Heart right ventricle (tissue), 16 donors: ENCODE measurements at regions of chr11 and their contacts with region 1.

Region 1: GRCh38 chr11:11798586-11799438 is 43.0 kb upstream of the USP47 start:
- DNase-seq: peak; percentile 83 to 86
- ATAC-seq: peak; percentile 79 to 95 (median 91)
- H3K4me3 ChIP-seq: no peak overlapping the region
- H3K27ac ChIP-seq: no peak overlapping the region
- H3K4me1 ChIP-seq: peaks cover 0 to 9% (median 0%) of the 10 kb centered on the region in 9 donors
- H3K27me3 ChIP-seq: peaks cover 0 to 22% (median 0%) of the 10 kb centered on the region in 7 donors
- CTCF ChIP-seq: peak; percentile 81 to 97 (median 92)

Region 2: DNA sequence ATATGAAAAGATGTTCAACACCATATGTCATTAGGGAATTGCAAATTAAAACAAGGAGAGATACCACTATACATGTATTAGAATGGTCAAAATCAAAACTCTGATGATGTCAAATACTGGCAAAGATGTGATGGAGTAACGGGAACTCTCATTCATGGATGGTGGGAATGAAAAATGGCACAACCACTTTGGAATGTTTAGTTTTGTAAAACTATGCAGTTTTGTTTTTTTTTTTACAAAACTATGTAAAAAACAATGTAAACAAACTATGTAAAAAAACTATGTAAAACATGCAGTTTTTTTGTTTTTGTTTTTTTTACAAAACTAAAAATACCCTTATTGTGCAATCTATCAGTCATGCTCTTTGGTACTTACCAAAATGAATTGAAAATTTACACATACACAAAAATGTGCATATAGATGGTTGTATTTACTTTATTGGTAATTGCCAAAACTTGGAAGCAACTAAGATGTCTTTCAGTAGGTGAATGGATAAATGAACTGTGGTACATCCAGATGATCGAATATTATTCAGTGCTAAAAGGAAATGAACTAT is 37.9 kb after region 1 on chr11:
- intact Hi-C with region 1: loop called in 2 of 10 experiments (anchors 5 kb)
- DNase-seq: no peak
- ATAC-seq: no peak
- H3K4me3 ChIP-seq: no peak overlapping the region
- H3K27ac ChIP-seq: no peak overlapping the region
- H3K4me1 ChIP-seq: peaks cover 0 to 10% (median 0%) of the 10 kb centered on the region in 9 donors
- H3K27me3 ChIP-seq: no peaks in the 10 kb centered on the region
- CTCF ChIP-seq: no peak

Region 3: GRCh38 chr11:11841723-11842420 is 43.1 kb after region 1 on chr11 and contains the start of gene USP47:
- intact Hi-C with region 1: loop called in 4 of 10 experiments (anchors 5 kb)
- DNase-seq: peak; percentile 94 to 95
- ATAC-seq: peak; percentile 90 to 96 (median 94)
- H3K4me3 ChIP-seq: peak within 1 kb of the TSS; percentile 61 to 97 (median 84)
- H3K27ac ChIP-seq: peak within 1 kb of the TSS; percentile 93 to 99 (median 97)
- H3K4me1 ChIP-seq: peaks cover 0 to 47% (median 38%) of the 10 kb centered on the region in 9 donors
- H3K27me3 ChIP-seq: no peaks in the 10 kb centered on the region
- CTCF ChIP-seq: peak; percentile 38 to 81 (median 59)
- total RNA-seq, gene USP47: 46.4 to 56.4 (median 52.8) TPM

Region 4: DNA sequence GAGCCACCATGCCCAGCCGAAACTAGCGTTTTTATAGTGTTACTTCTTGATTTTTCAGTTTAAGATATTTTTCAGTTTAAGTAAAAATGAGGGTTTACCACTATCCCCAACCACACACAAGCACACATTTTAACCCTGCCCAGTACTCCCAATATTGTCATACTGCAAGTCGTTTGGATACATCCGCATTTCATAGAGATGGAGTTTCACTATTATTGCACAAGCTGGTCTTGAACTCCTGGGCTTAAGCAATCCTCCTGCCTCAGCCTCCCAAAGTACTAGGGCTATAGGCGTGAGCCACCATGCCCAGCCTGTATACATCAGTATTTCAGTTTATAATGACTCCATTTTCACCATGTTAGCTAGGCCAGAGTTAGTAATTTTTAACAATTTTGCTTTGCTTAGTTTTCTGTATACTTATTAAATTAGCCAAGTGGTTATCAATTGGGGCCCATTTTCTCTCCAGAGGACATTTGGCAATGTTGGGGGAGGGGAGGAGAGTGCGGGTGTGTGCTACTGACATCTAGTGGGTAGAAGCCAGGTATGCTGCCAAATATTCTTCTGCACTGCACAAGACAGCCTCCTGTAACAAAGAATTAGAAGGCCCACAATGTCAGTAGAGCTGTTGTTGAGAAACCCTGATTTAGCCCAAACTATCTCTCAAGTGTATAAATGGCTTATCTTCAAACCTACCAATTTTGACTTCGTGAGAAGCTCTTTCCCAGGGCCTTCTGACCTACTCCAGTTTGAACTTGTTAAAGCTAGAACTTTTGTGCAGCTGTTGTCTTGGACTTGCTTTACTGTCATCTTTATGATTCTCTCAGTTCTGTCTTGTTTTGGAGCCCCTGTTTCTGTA is 50.3 kb after region 1 on chr11:
- intact Hi-C with region 1: loop called in 4 of 10 experiments (anchors 2 to 5 kb)
- DNase-seq: peak; percentile 22 to 62
- ATAC-seq: peak; percentile 71 to 90 (median 80)
- H3K4me3 ChIP-seq: no peak overlapping the region
- H3K27ac ChIP-seq: peak overlapping the region in 9 of 10 donors; percentile 18 to 65 (median 33)
- H3K4me1 ChIP-seq: peaks cover 0 to 100% (median 87%) of the 10 kb centered on the region in 9 donors
- H3K27me3 ChIP-seq: no peaks in the 10 kb centered on the region
- CTCF ChIP-seq: peak; percentile 13 to 75 (median 64)

Region 5: DNA sequence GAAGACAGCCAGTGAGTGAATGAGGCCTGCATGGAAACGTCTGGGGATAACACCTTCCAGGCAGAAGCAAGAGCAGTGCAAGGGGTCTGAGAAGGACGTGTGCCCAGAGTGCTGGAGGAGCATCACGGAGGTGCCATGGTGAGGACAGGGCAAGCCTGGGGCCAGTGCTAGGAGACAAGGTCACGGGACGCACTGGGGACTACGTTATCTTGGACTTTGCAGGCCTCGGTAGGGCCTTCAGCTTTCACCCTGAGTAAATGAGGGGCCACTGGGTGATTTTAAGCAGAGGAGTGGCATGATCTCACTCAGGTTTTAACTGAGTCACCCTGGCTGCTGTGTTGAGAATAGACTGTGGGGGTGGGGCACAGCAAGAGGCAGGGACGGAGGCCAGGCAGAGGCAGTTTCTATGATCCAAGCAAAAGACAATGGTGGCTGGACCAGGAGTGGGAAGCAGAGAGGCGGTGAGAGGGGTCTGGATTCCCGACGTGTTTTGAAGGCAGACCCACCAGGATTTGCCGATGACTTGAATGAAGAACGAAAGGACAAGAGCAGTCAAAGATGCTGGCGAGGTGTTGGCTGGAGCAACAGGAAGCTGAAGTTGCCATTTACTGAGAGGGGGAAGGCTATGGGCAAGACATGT is 475.9 kb after region 1 on chr11:
- intact Hi-C with region 1: loop called in 1 of 10 experiments (anchors 10 kb)
- DNase-seq: no peak
- ATAC-seq: no peak
- H3K4me3 ChIP-seq: no peak overlapping the region
- H3K27ac ChIP-seq: no peak overlapping the region
- H3K4me1 ChIP-seq: peaks cover 0 to 10% (median 2%) of the 10 kb centered on the region in 9 donors
- H3K27me3 ChIP-seq: no peaks in the 10 kb centered on the region
- CTCF ChIP-seq: no peak